Posterior vena cava (tissue), 2 donors: ENCODE measurements at regions of chr2 and their contacts with region 1.

Region 1: GRCh38 chr2:28047681-28048080 is 157.2 kb downstream of the BABAM2 start:
- DNase-seq: no peak

Region 2: GRCh38 chr2:27855476-27855875 is 192.2 kb before region 1 on chr2:
- intact Hi-C with region 1: no loop called
- DNase-seq: no peak

Region 3: GRCh38 chr2:28080911-28081310 is 33.2 kb after region 1 on chr2:
- intact Hi-C with region 1: no loop called
- DNase-seq: no peak

Region 4: GRCh38 chr2:28096421-28096820 is 48.7 kb after region 1 on chr2:
- intact Hi-C with region 1: loop called in 1 of 2 experiments (anchors 1 kb)
- DNase-seq: no peak

Region 5: DNA sequence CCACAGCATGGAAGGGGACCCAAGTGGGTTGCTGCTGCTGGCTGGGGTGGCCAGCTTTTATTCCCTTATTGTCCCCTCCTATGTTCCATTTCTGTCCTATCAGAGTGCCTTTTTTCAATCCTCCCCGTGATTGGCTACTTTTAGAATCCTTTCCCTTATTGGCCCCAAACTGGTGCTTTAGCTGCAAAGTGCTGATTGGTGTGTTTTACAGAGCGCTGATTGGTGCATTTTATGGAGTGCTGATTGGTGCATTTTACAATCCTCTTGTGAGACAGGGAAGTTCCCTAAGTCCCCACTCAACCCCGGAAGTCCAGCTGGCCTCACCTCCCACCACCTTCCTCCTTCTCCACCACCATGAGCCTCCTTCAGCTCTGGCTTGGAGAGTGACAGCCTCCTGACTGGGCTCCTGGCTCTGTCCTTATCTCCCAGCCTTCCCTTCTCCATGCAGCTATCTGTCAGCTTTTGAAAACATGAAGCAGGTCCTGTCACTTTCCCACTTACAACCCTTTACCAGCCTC is 427.5 kb after region 1 on chr2:
- intact Hi-C with region 1: no loop called
- DNase-seq: no peak